CD4-positive, alpha-beta memory T cell (primary cell): ENCODE measurements at regions of chr12 and their contacts with region 1.

Region 1: DNA sequence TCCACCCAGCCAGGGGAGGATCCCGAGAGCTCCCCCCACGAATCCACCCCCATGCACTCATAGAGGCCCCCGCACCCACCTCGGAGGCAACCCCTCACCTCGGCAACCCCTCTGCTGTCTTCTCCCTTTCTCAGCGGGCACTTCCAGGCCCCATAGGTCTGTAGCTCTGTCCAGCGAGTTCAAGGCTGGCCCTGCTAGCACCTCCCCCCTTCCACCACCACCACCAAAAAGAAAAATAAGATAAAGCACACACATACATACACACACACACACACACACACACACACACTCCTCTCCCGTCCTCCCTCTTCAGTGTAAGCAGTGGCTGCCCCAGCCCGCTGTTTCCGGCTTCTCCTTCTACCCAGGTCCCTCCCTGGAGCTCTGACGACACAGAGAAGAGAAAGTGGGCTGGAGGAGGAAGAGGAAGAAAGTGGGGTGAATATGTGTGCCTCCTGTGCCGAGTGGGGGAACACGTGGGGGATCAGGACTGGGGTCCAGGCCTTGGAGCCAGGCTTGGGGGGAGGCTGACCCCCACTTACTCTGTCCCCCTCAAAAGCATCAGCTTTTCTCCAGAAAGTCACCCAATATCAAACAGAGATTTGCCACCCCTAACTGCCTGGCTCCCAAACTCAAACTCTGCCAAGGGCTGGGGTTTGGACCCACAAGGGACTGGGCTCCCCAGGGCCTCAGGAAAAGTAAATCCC is at the start of gene STAT6:
- DNase-seq: peak; percentile 87 to 96 (median 90)
- H3K4me3 ChIP-seq: peak within 1 kb of the TSS; percentile 90 to 99
- H3K4me3 Mint-ChIP-seq: peak within 1 kb of the TSS; percentile 93 to 100 (median 96)
- H3K27ac ChIP-seq: peak within 1 kb of the TSS; percentile 93
- H3K27ac Mint-ChIP-seq: peak within 1 kb of the TSS; percentile 94 to 100 (median 98)
- H3K4me1 ChIP-seq: peaks cover 34% of the 10 kb centered on the region
- H3K4me1 Mint-ChIP-seq: peaks cover 28 to 64% (median 38%) of the 10 kb centered on the region in 4 donors
- H3K27me3 ChIP-seq: no peaks in the 10 kb centered on the region
- H3K27me3 Mint-ChIP-seq: peaks cover 0 to 4% of the 10 kb centered on the region in 2 donors
- total RNA-seq, gene STAT6: 399 to 424 TPM

Region 2: GRCh38 chr12:56636675-56637540 is 474.3 kb before region 1 on chr12:
- CTCF ChIA-PET with region 1: interaction called, 3 read pairs
- POLR2A ChIA-PET with region 1: interaction called, 17 read pairs
- intact Hi-C with region 1: no loop called
- DNase-seq: peak; percentile 93 to 99 (median 96)
- H3K4me3 ChIP-seq: peak overlapping the region; percentile 58 to 64
- H3K4me3 Mint-ChIP-seq: peak overlapping the region; percentile 86 to 99 (median 96)
- H3K27ac ChIP-seq: peak overlapping the region; percentile 81
- H3K27ac Mint-ChIP-seq: peak overlapping the region; percentile 82 to 99 (median 97)
- H3K4me1 ChIP-seq: peaks cover 44% of the 10 kb centered on the region
- H3K4me1 Mint-ChIP-seq: peaks cover 31 to 59% (median 46%) of the 10 kb centered on the region in 4 donors
- H3K27me3 ChIP-seq: no peaks in the 10 kb centered on the region
- H3K27me3 Mint-ChIP-seq: no peaks in the 10 kb centered on the region

Region 3: DNA sequence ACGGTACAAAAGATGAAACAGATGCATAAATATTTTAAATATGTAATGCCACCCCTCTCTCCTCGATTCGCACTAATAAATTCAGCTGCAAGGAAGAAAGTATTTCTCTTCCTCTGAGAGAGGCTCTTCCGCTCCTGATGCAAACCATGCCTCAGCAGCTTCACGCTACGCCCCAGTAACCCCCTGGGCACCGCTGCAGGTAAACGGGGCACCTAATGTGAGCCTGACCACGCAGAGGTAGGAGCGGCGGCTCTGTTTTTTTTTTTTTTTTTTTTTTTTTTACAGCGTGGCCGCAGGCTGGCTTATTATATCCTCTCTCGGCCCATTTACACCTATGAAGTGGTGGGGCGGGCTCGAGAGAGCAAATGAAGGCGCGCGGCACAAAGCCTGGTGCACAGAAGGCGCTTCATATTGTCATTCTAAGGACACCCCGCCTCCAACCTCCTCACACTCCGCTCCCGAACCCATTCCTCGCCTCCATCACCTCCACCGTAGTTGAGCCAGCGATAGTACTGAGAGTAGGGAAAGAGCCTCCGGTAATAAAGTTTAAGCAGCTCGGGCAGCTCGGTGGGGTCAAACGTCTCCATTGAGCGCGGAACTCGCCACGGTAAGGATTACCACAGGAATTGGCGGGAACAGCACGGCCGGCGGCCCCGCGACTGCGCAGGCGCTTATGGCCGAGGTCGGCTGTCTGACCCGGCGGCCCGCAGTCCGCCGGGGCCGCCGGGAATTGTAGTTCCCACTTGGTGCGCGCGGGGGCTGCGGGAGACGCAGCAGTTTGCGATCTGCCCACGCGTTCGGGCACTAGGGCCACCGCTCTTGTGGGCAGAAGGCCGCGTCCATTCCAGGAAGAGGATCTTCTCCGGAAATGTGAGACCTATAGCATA is 359.2 kb before region 1 on chr12 and contains the start of gene PRIM1:
- CTCF ChIA-PET with region 1: interaction called, 9 read pairs
- POLR2A ChIA-PET with region 1: interaction called, 13 read pairs
- intact Hi-C with region 1: loop called (anchors 1 kb)
- DNase-seq: peak; percentile 80 to 83 (median 82)
- H3K4me3 ChIP-seq: peak within 1 kb of the TSS; percentile 80 to 92
- H3K4me3 Mint-ChIP-seq: peak within 1 kb of the TSS; percentile 96 to 99 (median 98)
- H3K27ac ChIP-seq: peak within 1 kb of the TSS; percentile 82
- H3K27ac Mint-ChIP-seq: peak within 1 kb of the TSS; percentile 94 to 98 (median 96)
- H3K4me1 ChIP-seq: peaks cover 10% of the 10 kb centered on the region
- H3K4me1 Mint-ChIP-seq: peaks cover 20 to 43% (median 28%) of the 10 kb centered on the region in 4 donors
- H3K27me3 ChIP-seq: no peaks in the 10 kb centered on the region
- H3K27me3 Mint-ChIP-seq: no peaks in the 10 kb centered on the region
- total RNA-seq, gene PRIM1: 30.2 to 34.3 TPM

Region 4: DNA sequence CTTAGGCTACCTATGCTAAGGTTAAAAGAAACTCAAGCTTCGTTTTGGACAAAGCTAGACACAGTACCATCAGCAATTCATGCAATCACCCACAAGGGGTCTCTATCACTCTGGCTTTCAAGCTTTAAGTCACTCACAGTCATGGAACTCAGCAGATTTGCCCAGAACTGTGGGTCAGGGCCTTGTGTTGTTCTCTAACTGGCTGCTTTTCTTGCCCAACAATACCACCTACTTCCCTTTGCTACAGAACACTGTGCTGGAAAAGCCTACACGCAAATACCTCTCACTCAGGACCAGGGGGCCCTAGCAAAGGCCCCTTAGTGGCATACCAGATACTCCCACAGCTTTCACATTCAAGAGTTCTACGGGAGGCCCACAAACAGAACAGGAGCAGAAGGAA is 41.7 kb before region 1 on chr12:
- CTCF ChIA-PET with region 1: interaction called, 458 read pairs
- POLR2A ChIA-PET with region 1: interaction called, 373 read pairs
- intact Hi-C with region 1: loop called (anchors 1 kb)
- DNase-seq: peak; percentile 73 to 77 (median 75)
- H3K4me3 ChIP-seq: no peak overlapping the region
- H3K4me3 Mint-ChIP-seq: peak overlapping the region in 3 of 8 donors; percentile 0 to 37 (median 28)
- H3K27ac ChIP-seq: peak overlapping the region; percentile 57
- H3K27ac Mint-ChIP-seq: peak overlapping the region; percentile 75 to 89 (median 85)
- H3K4me1 ChIP-seq: peaks cover 25% of the 10 kb centered on the region
- H3K4me1 Mint-ChIP-seq: peaks cover 11 to 34% (median 15%) of the 10 kb centered on the region in 4 donors
- H3K27me3 ChIP-seq: no peaks in the 10 kb centered on the region
- H3K27me3 Mint-ChIP-seq: no peaks in the 10 kb centered on the region

Region 5: DNA sequence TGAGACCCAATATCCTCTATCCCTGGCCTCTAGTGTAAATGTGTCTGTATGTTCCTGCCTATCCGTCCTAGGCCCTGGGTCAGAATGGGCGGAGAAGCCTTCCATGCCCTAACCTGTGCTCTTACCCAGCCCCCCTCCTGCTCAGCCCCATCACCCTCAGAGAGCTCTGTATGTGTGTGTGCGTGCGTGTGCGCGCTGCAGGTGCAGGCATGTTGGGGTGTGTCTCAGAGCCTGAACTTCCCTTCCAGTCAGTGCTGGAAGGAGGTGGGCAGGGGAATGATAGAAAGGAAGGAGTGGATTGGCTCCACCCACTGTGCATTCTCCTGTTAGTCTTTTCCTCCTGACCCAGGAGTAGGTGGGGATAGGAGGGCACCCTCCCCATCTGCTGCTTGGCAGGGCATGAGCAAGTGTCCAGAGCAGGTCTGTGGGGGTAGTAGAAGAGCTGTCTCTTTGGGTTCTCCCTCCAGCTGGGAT is 15.0 kb before region 1 on chr12:
- CTCF ChIA-PET with region 1: interaction called, 109 read pairs
- POLR2A ChIA-PET with region 1: interaction called, 622 read pairs
- intact Hi-C with region 1: no loop called
- DNase-seq: no peak
- H3K4me3 ChIP-seq: no peak overlapping the region
- H3K4me3 Mint-ChIP-seq: no peak overlapping the region
- H3K27ac ChIP-seq: no peak overlapping the region
- H3K27ac Mint-ChIP-seq: peak overlapping the region in 5 of 7 donors; percentile 18 to 88 (median 55)
- H3K4me1 ChIP-seq: peaks cover 42% of the 10 kb centered on the region
- H3K4me1 Mint-ChIP-seq: peaks cover 14 to 43% (median 28%) of the 10 kb centered on the region in 4 donors
- H3K27me3 ChIP-seq: no peaks in the 10 kb centered on the region
- H3K27me3 Mint-ChIP-seq: no peaks in the 10 kb centered on the region

Region 6: DNA sequence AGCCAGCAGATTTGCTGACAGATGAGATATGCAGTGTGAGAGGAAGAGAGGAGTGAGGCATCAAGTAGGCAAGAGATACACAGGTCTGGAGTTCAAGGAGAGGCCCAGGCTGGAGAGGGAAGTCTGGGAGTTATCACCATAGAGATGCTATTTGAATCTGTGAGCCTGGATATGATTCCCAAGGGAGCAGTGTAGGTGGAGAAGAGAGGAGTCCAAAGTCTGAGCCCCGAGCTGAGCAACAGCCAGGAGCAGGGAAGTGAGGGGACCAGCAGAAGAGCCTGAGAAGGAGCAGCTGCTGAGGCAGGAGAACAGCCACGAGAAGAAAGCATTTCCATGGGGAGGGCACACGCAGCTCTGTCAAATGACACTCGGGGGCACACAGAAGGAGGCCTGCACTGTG is 85.3 kb after region 1 on chr12:
- CTCF ChIA-PET with region 1: no interaction called
- POLR2A ChIA-PET with region 1: no interaction called
- intact Hi-C with region 1: no loop called
- DNase-seq: no peak
- H3K4me3 ChIP-seq: no peak overlapping the region
- H3K4me3 Mint-ChIP-seq: no peak overlapping the region
- H3K27ac ChIP-seq: no peak overlapping the region
- H3K27ac Mint-ChIP-seq: no peak overlapping the region
- H3K4me1 ChIP-seq: no peaks in the 10 kb centered on the region
- H3K4me1 Mint-ChIP-seq: peaks cover 0 to under 1% (median 0%) of the 10 kb centered on the region in 4 donors
- H3K27me3 ChIP-seq: no peaks in the 10 kb centered on the region
- H3K27me3 Mint-ChIP-seq: no peaks in the 10 kb centered on the region

Region 7: DNA sequence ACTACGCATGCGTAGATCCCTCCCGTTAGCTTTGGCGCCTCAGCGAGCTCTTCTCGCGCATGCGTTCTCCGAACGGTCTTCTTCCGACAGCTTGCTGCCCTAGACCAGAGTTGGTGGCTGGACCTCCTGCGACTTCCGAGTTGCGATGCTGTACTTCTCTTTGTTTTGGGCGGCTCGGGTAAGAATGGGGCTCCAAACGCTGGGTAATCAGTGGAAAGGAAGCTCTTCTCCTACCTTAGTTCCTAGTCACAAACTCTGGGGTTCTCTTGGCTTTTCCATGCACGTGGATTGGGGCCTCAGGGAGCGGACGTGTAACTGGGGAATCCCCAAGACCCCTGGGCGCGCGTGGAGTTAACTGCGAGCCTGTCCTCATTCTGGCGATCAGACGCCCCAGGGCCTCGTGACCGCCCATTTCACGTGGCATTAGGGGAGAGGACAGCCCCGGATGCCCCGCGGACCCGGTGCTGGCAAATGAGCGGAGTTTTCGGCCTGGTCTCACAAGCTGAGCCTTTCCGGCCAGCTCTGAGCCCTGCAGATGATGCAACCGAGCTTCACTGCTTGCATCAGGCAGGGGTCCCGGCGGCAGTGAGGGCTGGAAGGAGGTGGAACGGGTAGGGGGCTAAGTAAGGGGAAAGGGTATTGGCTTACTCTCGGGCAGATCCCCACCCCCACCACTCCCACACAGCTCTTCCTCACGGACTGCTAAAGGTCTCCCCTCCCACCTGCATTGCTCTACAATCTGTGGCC is 118.6 kb after region 1 on chr12 and contains the start of gene SHMT2:
- CTCF ChIA-PET with region 1: interaction called, 5 read pairs
- POLR2A ChIA-PET with region 1: interaction called, 16 read pairs
- intact Hi-C with region 1: no loop called
- DNase-seq: peak; percentile 89 to 90 (median 90)
- H3K4me3 ChIP-seq: peak within 1 kb of the TSS; percentile 80 to 90
- H3K4me3 Mint-ChIP-seq: peak within 1 kb of the TSS; percentile 92 to 99 (median 94)
- H3K27ac ChIP-seq: peak within 1 kb of the TSS; percentile 57
- H3K27ac Mint-ChIP-seq: peak within 1 kb of the TSS; percentile 80 to 95 (median 89)
- H3K4me1 ChIP-seq: peaks cover 66% of the 10 kb centered on the region
- H3K4me1 Mint-ChIP-seq: peaks cover 27 to 67% (median 46%) of the 10 kb centered on the region in 4 donors
- H3K27me3 ChIP-seq: peaks cover 16% of the 10 kb centered on the region
- H3K27me3 Mint-ChIP-seq: peaks cover 14 to 17% of the 10 kb centered on the region in 2 donors
- total RNA-seq, gene SHMT2: 39.8 to 46.1 TPM